Left cardiac atrium (tissue), 4 donors: ENCODE measurements at regions of chr14 and their contacts with region 1.

Region 1: GRCh38 chr14:39266871-39267591 is 33.3 kb downstream of the MIA2 start:
- DNase-seq: peak; percentile 87
- ATAC-seq: peak; percentile 93 to 97

Region 2: GRCh38 chr14:39302124-39302810 is 35.2 kb after region 1 on chr14:
- intact Hi-C with region 1: no loop called
- DNase-seq: no peak
- ATAC-seq: no peak

Region 3: DNA sequence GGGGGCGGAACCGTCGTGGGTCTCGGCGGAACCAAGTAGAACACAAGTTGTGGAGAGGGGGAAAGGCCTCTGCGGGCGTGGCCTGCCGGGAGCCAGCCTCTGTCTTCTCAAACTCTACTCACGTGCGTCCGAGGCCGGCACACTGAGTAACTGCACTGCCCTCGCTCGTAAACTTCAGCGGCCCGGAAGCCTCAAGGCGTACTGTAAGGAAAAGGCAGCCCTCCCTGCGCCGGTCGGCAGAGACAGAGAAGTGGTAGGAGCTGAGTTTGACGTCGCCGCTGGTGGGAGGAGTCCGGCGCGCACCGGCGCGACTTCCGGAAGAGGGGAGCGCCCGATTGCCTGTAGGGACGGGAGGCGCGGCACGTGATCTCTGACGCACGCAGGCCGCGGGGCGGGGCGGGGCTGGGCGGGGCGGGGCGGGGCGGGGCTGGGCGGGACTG is 165.2 kb after region 1 on chr14 and contains the start of gene FBXO33:
- intact Hi-C with region 1: loop called in 1 of 2 experiments (anchors 5 kb)
- DNase-seq: peak; percentile 97
- ATAC-seq: peak; percentile 94 to 95
- total RNA-seq, gene FBXO33: 5.2 to 5.3 TPM